Activated CD4-positive, alpha-beta T cell treated with anti-CD3 and anti-CD28 coated beads for 36 hours (primary cell): ENCODE measurements at regions of chr15 and their contacts with region 1.

Region 1: DNA sequence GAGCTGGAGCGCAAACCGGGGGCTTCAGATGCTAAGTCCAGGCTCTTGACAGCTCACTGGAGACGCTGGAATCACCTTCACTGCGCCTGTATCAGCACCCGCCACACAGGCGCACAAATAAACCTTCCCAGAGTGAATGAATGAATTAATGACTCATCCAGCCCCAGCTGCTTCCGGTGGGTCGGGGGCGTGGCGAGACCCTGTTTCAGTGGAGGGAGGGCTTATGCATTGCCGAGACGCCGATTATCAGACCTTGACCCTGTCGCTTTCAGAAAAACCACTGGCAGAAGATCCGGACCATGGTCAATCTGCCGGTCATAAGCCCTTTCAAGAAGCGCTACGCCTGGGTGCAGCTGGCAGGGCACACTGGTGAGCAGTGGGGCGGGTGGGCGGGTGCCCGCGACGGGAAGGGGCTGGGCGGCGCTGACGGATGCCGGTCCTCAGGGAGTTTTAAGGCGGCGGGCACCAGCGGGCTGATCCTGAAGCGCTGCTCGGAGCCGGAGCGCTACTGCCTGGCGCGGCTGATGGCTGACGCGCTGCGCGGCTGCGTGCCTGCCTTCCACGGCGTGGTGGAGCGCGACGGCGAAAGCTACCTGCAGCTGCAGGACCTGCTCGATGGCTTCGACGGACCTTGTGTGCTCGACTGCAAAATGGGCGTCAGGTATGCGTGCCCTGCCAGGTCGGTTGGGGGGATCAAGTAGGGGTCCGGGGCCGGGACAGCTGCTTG is 7.7 kb downstream of the ITPKA start:
- DNase-seq: peak; percentile 69
- ATAC-seq: peak; percentile 71
- H3K4me3 Mint-ChIP-seq: peak overlapping the region; percentile 57
- H3K27ac Mint-ChIP-seq: no peak overlapping the region
- H3K4me1 Mint-ChIP-seq: peaks cover 16% of the 10 kb centered on the region
- H3K27me3 Mint-ChIP-seq: peaks cover 55% of the 10 kb centered on the region

Region 2: DNA sequence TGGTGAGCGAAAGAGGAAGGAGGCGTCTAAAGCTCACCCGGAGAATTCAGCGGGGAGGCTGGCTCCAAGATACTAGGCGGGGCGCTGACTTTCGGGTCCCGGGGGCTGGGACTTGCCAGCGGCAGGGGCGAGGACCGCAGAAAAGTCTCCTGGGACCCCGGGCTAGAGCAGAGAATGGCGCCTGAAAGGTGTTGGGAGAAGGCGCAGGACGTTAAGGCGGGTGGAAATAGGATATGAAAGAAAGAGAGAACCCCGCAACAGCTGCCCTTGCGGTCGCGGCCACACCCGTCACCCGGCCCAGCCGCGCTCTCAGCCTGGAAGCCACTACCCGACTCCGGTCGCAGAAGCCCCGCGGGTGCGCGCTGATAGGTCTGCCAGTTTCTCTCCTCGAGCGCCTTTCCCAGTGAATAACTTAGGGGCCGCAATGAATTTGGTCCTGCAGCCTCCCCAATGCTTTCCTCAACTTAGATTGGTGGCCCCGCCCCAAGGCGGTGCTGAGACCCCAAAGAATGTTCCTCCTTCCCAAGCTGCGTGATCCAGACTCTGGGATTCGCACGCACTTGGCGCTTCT is 11.7 kb after region 1 on chr15:
- CTCF ChIA-PET with region 1: no interaction called
- POLR2A ChIA-PET with region 1: no interaction called
- intact Hi-C with region 1: loop called in 1 of 2 experiments (anchors 1 kb)
- DNase-seq: peak; percentile 52
- ATAC-seq: no peak
- H3K4me3 Mint-ChIP-seq: peak overlapping the region; percentile 52
- H3K27ac Mint-ChIP-seq: no peak overlapping the region
- H3K4me1 Mint-ChIP-seq: peaks cover 22% of the 10 kb centered on the region
- H3K27me3 Mint-ChIP-seq: peaks cover 30% of the 10 kb centered on the region